ENCODE measurements at regions of chr7 and their contacts with region 1.

Region 1: GRCh38 chr7:55594870-55595269 is 22.6 kb upstream of the VOPP1 start:
- DNase-seq: no peak
- H3K4me3 ChIP-seq: no peak overlapping the region
- H3K27ac ChIP-seq: no peak overlapping the region
- H3K4me1 ChIP-seq: peaks cover 0 to 12% (median 0%) of the 10 kb centered on the region in 3 donors
- H3K27me3 ChIP-seq: peaks cover 0 to 20% (median 0%) of the 10 kb centered on the region in 4 donors
- CTCF ChIP-seq: no peak
- POLR2A ChIP-seq: no peak

Region 2: DNA sequence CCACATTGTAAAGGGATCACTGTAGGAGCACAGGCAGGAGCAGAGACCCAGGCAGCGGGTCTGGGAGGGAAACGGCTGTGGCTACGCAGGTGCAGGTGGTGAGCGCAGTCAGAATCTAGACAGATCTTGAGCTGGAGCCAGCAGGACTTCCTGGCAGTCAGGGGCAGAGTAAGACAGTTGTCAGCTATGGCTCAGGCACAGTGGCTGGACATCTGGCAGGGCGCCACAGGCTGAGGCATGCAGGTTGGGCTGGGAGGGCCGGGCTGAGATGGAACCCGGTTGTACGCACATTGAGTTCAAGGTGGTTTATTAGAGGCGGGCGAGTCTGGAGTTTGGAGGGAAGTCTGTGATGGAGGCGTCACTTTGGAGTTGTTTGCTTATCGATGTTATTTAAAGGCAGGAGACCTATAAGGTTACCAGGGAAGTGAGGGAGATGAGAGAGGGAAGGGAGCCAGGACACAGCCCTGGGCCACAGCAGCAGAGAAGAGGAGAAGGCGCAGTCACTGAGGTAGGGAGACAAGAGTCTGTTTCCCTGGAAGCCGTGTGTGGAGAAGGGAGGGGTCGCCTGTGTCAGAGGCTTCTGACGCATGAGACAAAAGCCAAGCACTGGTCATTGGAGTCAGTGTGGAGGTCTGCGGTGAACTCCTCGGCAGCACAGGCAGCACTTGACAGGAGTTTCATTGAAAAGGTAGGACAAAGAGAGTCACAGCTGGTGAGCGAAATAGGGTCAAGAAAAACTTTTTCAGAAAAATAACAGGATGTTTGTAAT is 155.9 kb before region 1 on chr7:
- intact Hi-C with region 1: loop called (anchors 5 kb)
- DNase-seq: no peak
- H3K4me3 ChIP-seq: no peak overlapping the region
- H3K27ac ChIP-seq: no peak overlapping the region
- H3K4me1 ChIP-seq: no peaks in the 10 kb centered on the region
- H3K27me3 ChIP-seq: no peaks in the 10 kb centered on the region
- CTCF ChIP-seq: no peak
- POLR2A ChIP-seq: no peak

Region 3: DNA sequence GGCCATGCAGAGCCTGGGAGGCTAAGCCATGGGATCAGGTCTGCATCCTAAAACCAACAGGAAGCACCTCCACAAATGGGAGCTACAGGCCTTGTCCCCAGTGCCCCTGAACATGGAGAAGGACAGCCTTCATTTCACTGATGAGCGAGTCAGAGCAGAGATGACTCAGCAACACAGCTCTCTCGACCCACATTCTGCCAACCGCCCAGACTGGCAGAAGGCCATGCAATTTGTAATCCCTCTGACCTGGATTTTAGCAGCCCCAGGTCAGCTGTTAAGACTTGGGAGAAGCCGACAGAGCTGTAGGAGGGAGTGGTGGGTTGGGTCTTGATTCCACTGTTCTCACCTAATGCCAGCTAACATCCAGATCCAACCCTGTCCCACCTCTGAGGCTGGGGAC is 48.0 kb before region 1 on chr7:
- intact Hi-C with region 1: no loop called
- DNase-seq: no peak
- H3K4me3 ChIP-seq: no peak overlapping the region
- H3K27ac ChIP-seq: peak overlapping the region in 3 of 4 donors; percentile 35 to 60 (median 45)
- H3K4me1 ChIP-seq: peaks cover 28 to 68% (median 33%) of the 10 kb centered on the region in 3 donors
- H3K27me3 ChIP-seq: no peaks in the 10 kb centered on the region
- CTCF ChIP-seq: no peak
- POLR2A ChIP-seq: no peak

Region 4: DNA sequence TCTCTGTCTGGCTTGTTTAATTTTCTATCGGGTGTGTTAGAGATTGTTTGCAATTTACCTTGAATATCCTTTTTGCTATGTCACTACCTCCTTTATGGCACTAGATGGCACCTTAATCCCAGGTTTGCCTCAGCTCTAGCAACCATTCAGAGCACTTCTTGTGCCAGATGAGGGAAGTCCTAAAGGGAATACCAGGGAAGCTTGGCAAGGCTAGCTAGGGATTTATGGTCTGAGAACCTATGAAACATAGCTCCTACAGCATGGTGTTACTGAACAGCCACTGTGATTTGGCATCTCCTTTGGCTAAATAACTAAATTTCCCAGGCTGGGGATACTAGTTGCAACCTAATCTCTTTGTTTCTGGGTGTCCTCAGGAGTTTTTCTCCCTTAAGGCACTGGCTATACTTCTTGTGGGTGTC is 46.4 kb after region 1 on chr7:
- intact Hi-C with region 1: no loop called
- DNase-seq: no peak
- H3K4me3 ChIP-seq: no peak overlapping the region
- H3K27ac ChIP-seq: no peak overlapping the region
- H3K4me1 ChIP-seq: peaks cover 0 to 6% (median 0%) of the 10 kb centered on the region in 3 donors
- H3K27me3 ChIP-seq: no peaks in the 10 kb centered on the region
- CTCF ChIP-seq: peak; percentile 63 to 86 (median 76)
- POLR2A ChIP-seq: no peak

Measured in esophagus squamous epithelium (tissue), 5 donors.